ENCODE measurements at regions of chr2 and their contacts with region 1.

Region 1: DNA sequence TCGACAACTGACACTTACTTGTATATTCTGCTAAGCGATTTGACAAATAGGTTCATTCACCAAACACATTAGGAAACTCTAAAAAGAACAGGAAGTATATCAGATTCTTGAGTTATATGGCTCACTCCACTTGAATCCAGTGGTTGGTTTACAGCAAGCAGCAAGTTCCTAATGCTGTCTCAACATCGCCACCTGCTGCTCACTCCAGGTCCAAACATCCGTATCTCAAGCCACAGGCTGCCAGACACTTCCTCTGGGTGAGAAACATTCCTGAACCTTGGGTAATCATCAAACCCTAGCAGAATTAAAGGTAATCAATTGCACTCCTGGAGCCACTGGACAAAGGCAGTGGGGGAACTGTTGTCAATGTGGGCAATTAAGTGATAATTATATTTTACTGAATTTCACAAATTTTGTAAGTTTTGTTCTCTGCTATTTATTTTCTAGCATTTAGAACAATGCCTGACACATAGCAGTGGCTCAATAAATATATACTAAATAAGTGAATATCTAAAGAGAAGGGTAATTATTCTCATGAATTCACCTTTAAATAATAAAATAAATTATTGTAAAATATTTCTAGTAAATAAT is 107.1 kb upstream of the TTN start:
- DNase-seq: peak; percentile 87
- ATAC-seq: peak; percentile 85
- H3K4me3 Mint-ChIP-seq: no peak overlapping the region
- H3K27ac Mint-ChIP-seq: no peak overlapping the region
- H3K4me1 Mint-ChIP-seq: peaks cover 7% of the 10 kb centered on the region
- H3K27me3 Mint-ChIP-seq: no peaks in the 10 kb centered on the region

Region 2: DNA sequence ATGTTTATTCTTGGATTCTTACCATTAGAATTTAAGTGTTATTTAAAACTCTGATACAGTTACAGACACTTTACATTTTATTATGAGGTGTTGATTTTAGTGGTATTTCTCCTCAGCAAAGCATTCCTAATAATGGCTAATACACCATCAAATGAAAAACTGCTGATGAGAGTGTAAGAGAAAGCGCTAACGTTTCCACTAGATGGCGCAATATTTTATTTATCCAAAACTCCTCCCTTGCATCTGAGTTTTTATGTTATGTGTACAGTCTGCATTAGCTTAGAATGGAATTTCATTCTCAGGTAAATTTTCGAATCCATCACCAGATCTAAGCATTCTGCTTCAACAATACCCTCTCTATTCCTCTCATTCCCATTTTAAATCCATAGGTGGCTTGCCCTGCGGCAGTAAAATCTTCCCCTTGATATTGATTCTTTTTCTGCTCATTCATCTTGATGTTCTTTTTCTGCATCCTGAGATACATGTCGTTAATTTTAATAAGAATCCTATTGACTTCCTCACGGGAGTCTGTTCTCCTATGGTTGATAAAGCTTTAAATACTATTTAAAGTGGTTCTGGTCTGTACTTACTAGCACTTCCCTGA is 517.2 kb before region 1 on chr2:
- CTCF ChIA-PET with region 1: no interaction called
- POLR2A ChIA-PET with region 1: no interaction called
- intact Hi-C with region 1: loop called in 1 of 2 experiments (anchors 5 kb)
- DNase-seq: no peak
- ATAC-seq: peak; percentile 65
- H3K4me3 Mint-ChIP-seq: no peak overlapping the region
- H3K27ac Mint-ChIP-seq: no peak overlapping the region
- H3K4me1 Mint-ChIP-seq: no peaks in the 10 kb centered on the region
- H3K27me3 Mint-ChIP-seq: no peaks in the 10 kb centered on the region

Region 3: GRCh38 chr2:178761759-178762371 is 152.5 kb before region 1 on chr2:
- CTCF ChIA-PET with region 1: interaction called, 47 read pairs
- POLR2A ChIA-PET with region 1: no interaction called
- intact Hi-C with region 1: loop called (anchors 1 kb)
- DNase-seq: peak; percentile 44
- ATAC-seq: peak; percentile 66
- H3K4me3 Mint-ChIP-seq: no peak overlapping the region
- H3K27ac Mint-ChIP-seq: no peak overlapping the region
- H3K4me1 Mint-ChIP-seq: no peaks in the 10 kb centered on the region
- H3K27me3 Mint-ChIP-seq: no peaks in the 10 kb centered on the region

Region 4: GRCh38 chr2:178796079-178796677 is 118.2 kb before region 1 on chr2:
- CTCF ChIA-PET with region 1: interaction called, 9 read pairs
- POLR2A ChIA-PET with region 1: no interaction called
- intact Hi-C with region 1: loop called (anchors 1 kb)
- DNase-seq: no peak
- ATAC-seq: no peak
- H3K4me3 Mint-ChIP-seq: no peak overlapping the region
- H3K27ac Mint-ChIP-seq: no peak overlapping the region
- H3K4me1 Mint-ChIP-seq: no peaks in the 10 kb centered on the region
- H3K27me3 Mint-ChIP-seq: no peaks in the 10 kb centered on the region

Region 5: GRCh38 chr2:178891265-178891958 is 22.9 kb before region 1 on chr2:
- CTCF ChIA-PET with region 1: interaction called, 20 read pairs
- POLR2A ChIA-PET with region 1: no interaction called
- intact Hi-C with region 1: loop called (anchors 1 kb)
- DNase-seq: peak; percentile 79
- ATAC-seq: peak; percentile 90
- H3K4me3 Mint-ChIP-seq: no peak overlapping the region
- H3K27ac Mint-ChIP-seq: no peak overlapping the region
- H3K4me1 Mint-ChIP-seq: peaks cover 9% of the 10 kb centered on the region
- H3K27me3 Mint-ChIP-seq: no peaks in the 10 kb centered on the region

Region 6: DNA sequence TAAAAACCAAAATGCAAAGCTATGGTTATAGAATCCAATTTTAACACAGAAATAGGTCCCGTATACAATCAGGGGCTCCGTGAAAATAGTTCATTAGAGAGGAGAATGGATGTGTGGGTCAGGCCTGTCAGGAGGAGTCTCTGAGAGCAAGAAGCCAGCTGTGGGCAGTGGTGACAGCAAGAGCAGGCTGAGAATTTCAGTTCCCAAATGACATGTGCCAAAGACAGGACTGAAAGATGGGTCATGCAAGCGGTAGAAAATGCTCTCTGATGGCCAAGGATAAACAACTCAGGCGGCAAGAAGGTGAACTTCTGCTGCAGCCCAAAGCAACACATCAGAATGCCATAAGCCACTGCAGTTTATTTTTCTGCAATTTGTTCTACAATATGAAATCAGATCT is 35.2 kb after region 1 on chr2:
- CTCF ChIA-PET with region 1: no interaction called
- POLR2A ChIA-PET with region 1: no interaction called
- intact Hi-C with region 1: no loop called
- DNase-seq: no peak
- ATAC-seq: no peak
- H3K4me3 Mint-ChIP-seq: no peak overlapping the region
- H3K27ac Mint-ChIP-seq: no peak overlapping the region
- H3K4me1 Mint-ChIP-seq: no peaks in the 10 kb centered on the region
- H3K27me3 Mint-ChIP-seq: no peaks in the 10 kb centered on the region